Activated CD4-positive, alpha-beta T cell treated with anti-CD3 and anti-CD28 coated beads, Interleukin-2, amount 10 ng/mL, durations not matched to agents 24 days and 14 days (primary cell): ENCODE measurements at regions of chr11 and their contacts with region 1.

Region 1: GRCh38 chr11:88421530-88421929 is 84.0 kb upstream of the CTSC start:
- DNase-seq: peak; percentile 83
- H3K4me3 Mint-ChIP-seq: peak overlapping the region; percentile 58
- H3K27ac Mint-ChIP-seq: peak overlapping the region; percentile 71
- H3K4me1 Mint-ChIP-seq: peaks cover 60% of the 10 kb centered on the region
- H3K27me3 Mint-ChIP-seq: no peaks in the 10 kb centered on the region

Region 2: GRCh38 chr11:86523738-86524619 is 1897.6 kb before region 1 on chr11:
- intact Hi-C with region 1: loop called (anchors 5 kb)
- DNase-seq: no peak
- H3K4me3 Mint-ChIP-seq: peak overlapping the region; percentile 35
- H3K27ac Mint-ChIP-seq: peak overlapping the region; percentile 88
- H3K4me1 Mint-ChIP-seq: peaks cover 28% of the 10 kb centered on the region
- H3K27me3 Mint-ChIP-seq: no peaks in the 10 kb centered on the region

Region 3: GRCh38 chr11:88404932-88405710 is 16.4 kb before region 1 on chr11:
- intact Hi-C with region 1: loop called (anchors 2 kb)
- DNase-seq: no peak
- H3K4me3 Mint-ChIP-seq: no peak overlapping the region
- H3K27ac Mint-ChIP-seq: no peak overlapping the region
- H3K4me1 Mint-ChIP-seq: peaks cover 28% of the 10 kb centered on the region
- H3K27me3 Mint-ChIP-seq: no peaks in the 10 kb centered on the region

Region 4: GRCh38 chr11:88535916-88536547 is 114.5 kb after region 1 on chr11:
- intact Hi-C with region 1: loop called (anchors 2 kb)
- DNase-seq: no peak
- H3K4me3 Mint-ChIP-seq: no peak overlapping the region
- H3K27ac Mint-ChIP-seq: no peak overlapping the region
- H3K4me1 Mint-ChIP-seq: peaks cover 13% of the 10 kb centered on the region
- H3K27me3 Mint-ChIP-seq: peaks cover 4% of the 10 kb centered on the region